ENCODE measurements at regions of chr13 and their contacts with region 1.

Region 1: GRCh38 chr13:111429064-111429558 is 108.7 kb downstream of the TEX29 start:
- DNase-seq: peak; percentile 47
- CTCF ChIP-seq: peak; percentile 32

Region 2: DNA sequence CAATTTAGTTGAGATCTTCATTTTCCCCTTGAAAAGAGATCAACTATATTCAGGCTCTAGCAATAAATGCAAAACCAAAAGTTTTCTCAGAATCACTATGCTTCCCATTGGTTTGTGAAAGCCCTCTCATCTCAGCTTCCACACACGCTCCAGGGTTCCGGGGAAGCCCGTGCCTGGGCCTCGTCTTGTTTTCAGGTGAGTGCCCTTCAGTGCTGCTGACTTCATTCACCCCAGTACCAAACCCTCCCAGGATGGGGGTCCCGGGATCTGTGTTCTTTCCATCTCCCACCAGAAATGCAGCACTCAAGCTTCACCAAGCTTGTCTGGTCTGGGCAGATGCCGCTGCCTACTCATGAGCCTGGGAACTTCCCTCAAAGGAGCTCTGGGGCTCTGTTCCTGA is 11.0 kb before region 1 on chr13:
- CTCF ChIA-PET with region 1: interaction called, 10 read pairs
- POLR2A ChIA-PET with region 1: no interaction called
- DNase-seq: no peak
- CTCF ChIP-seq: no peak

Region 3: DNA sequence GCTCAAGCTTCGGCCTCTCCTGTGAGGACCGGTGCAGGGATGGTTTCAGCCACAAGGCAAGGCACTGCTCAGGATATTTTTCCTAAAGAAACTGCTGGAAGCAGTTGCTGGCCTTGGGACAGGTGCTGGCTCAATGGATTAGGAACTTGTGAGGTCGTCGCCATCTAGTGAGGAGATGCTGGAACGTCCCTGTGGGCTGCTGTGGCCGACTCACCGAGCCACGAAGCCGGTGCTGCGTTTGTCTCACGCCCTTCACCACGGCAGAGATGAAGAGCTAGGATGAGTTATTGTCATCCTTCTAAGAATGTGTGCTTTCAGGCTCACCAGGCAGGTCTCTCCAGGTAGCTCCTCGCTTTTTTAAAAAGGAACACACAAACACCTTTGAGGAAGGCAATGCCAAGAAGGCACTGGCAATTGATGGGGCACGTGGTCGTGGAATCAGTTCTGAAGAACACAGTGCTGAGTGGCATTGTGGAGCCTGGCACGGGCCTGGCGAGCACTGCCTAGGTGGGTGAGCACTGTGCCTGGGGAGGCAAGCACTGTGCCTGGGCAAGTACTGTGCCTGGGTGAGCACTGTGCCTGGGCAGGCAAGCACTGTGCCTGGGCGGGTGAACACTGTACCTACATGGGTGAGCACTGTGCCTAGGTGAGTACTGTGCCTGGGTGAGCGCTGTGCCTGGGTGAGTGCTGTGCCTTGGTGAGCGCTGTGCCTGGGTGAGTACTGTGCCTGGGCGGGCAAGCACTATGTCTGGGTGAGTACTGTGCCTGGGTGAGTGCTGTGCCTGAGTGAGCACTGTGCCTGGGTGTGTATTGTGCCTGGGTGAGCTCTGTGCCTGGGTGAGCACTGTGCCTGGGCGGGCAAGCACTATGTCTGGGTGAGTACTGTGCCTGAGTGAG is 31.7 kb after region 1 on chr13:
- CTCF ChIA-PET with region 1: no interaction called
- POLR2A ChIA-PET with region 1: no interaction called
- DNase-seq: no peak
- CTCF ChIP-seq: peak; percentile 25

Measured in GM10248 (cell line).